Psoas muscle (tissue), 8 donors: ENCODE measurements at regions of chr6 and their contacts with region 1.

Region 1: DNA sequence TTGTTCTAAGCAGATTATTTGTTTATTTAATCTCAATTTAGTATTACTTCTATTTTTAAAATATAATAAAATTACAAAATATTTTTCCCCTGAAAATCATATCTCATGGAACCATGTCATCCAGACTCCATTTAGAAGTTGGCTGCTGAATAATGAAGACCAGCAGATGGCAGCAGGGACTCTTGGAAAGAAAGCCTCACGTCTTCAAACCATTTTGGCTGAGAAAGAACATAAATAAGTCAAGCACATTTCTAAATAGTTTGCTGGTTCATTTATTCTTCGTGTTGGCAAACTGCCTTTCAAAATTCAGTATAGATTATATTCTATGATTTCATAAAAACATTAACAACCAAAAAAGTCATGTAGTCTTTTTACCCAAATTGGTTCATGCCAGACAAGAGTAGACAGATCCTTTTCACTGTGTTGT is 71.7 kb downstream of the RCAN2 start:
- DNase-seq: no peak
- ATAC-seq: peak; percentile 57 to 85 (median 70)
- H3K4me3 ChIP-seq: no peak overlapping the region
- H3K27ac ChIP-seq: no peak overlapping the region
- H3K4me1 ChIP-seq: peaks cover 11% of the 10 kb centered on the region
- H3K27me3 ChIP-seq: no peaks in the 10 kb centered on the region
- CTCF ChIP-seq: peak; percentile 82

Region 2: GRCh38 chr6:46626228-46626909 is 206.8 kb after region 1 on chr6:
- intact Hi-C with region 1: loop called (anchors 2 to 5 kb)
- DNase-seq: no peak
- ATAC-seq: peak in 2 of 4 donors; percentile 59 to 79
- H3K4me3 ChIP-seq: no peak overlapping the region
- H3K27ac ChIP-seq: no peak overlapping the region
- H3K4me1 ChIP-seq: no peaks in the 10 kb centered on the region
- H3K27me3 ChIP-seq: no peaks in the 10 kb centered on the region
- CTCF ChIP-seq: peak; percentile 73